ENCODE measurements at regions of chr17 and their contacts with region 1.

Region 1: DNA sequence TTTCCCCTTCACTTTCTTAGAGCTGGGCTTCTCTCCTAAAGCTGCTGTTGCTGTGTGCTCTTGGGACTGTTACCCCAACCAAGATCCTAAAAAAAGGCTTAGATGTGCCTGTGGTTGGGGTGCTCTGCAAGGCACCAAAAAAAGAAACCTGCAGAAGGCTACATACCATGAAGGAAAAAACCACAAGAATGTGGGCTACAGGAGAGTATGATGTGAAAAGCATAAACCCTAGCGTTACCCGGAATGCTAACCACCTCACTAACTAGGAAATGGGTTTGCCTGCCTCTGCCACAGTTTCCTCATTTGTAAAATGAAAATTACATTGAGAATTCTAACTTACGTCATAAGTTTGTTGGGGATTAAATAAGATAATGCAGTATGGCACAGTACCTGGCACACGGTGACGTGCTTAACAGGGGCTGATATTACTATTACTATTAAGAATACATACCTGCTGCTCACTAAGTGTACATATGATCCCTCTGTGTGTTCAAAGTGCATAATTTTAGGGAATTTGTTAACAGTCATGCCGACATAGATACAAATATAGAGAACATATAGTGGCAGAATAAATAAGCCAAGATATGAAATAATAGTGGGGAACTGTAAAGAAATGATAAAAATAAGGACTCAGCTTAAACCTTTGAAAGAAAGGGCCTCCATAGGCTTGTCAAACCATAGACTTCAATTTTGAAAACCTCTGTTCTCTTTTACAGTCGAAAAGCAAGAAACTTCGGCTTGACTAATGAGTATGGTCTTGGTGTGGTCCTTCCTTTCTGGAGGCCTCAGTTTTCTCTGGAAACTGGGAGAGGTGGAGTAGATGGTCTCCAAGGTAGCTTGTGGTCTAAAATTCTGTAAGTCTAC is 177.8 kb upstream of the TBX2 start:
- DNase-seq: peak; percentile 36
- H3K4me3 Mint-ChIP-seq: peak overlapping the region; percentile 67
- H3K27ac Mint-ChIP-seq: peak overlapping the region; percentile 92
- H3K4me1 Mint-ChIP-seq: peaks cover 61% of the 10 kb centered on the region
- H3K27me3 Mint-ChIP-seq: no peaks in the 10 kb centered on the region

Region 2: DNA sequence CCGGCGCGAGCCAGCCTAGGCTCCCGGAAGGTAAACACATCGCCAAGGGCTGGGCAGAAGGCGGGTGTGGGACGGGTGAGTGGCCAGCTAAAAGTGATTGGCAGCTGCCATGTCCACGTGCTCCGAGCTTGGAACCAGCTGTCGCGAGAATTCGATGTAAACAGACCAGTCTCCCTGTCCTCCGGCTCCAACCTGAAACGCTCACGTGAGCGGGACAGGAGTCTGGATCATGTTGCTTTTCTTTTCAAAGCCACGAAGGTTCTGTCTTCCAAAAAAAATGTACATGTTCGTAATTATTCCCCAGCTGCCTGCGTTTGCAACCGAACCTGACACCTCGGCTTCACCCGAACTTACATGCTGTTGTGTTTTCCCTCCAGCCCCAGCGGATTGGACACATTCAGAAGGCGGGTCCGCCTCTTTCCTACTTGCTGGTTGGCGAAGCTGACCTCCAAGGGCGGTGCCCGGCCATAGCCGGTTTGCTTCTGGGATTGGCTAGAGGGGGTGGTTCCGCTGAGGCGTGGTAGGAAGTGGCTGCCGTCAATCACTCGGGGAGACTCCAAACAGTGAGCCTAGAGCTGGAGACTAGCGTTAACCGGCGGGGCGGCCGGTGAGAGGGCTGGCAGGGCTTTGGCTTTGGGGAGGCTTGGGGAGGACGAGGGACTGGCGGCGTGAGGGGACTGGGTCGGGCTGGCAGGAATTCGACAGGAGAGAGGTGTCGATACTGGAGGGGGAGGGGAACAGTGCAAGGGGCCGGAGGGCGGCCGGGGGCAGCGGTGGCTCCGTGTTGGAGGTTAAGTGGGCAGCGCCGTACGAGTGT is 544.3 kb before region 1 on chr17 and contains the start of gene BCAS3:
- intact Hi-C with region 1: loop called (anchors 5 kb)
- DNase-seq: peak; percentile 97
- H3K4me3 Mint-ChIP-seq: peak within 1 kb of the TSS; percentile 89
- H3K27ac Mint-ChIP-seq: peak within 1 kb of the TSS; percentile 62
- H3K4me1 Mint-ChIP-seq: peaks cover 19% of the 10 kb centered on the region
- H3K27me3 Mint-ChIP-seq: no peaks in the 10 kb centered on the region
- total RNA-seq, gene BCAS3: 8.3 and 8.5 TPM in 2 replicates

Region 3: DNA sequence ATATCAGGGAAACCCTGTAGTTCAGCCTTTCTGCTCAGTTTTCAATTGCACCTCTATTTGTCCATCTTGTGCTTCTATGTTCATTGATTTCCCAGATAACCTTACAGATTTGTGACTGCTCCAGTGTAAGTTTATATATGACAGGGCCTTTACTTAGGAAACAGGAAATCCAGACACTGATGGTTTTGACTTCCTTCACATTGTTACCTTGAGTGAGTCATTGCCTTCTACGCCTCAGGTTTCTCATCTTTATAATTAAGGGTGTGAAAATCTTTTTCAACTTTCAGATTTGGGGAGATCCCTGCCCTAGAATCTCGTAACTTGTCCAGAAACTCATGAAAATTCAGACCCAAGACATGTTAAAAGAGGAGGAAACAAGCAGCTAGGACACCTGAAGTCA is 164.6 kb before region 1 on chr17:
- intact Hi-C with region 1: loop called (anchors 10 kb)
- DNase-seq: no peak
- H3K4me3 Mint-ChIP-seq: no peak overlapping the region
- H3K27ac Mint-ChIP-seq: no peak overlapping the region
- H3K4me1 Mint-ChIP-seq: peaks cover 24% of the 10 kb centered on the region
- H3K27me3 Mint-ChIP-seq: no peaks in the 10 kb centered on the region

Region 4: GRCh38 chr17:61128661-61129115 is 93.1 kb before region 1 on chr17:
- intact Hi-C with region 1: no loop called
- DNase-seq: no peak
- H3K4me3 Mint-ChIP-seq: no peak overlapping the region
- H3K27ac Mint-ChIP-seq: no peak overlapping the region
- H3K4me1 Mint-ChIP-seq: peaks cover 11% of the 10 kb centered on the region
- H3K27me3 Mint-ChIP-seq: peaks cover 12% of the 10 kb centered on the region

Region 5: DNA sequence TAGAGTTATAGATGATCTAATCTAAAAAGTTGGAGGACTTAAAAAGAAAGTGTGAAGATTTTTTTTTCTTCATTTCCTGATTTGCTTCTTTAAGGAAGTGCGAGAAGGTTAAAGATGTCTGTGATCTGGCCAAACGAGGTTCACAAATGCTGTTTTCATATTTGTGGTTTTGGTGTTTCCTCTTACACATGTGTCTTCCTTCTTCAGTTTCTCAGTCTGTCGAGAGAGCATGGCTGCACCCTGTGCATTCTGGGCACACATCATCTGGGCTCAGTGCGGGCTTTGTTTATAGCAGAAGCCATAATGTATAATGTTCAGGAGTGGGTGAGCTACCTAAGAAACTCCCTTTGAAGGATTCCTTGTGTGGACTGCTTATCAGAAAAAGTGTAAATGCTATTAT is 82.6 kb before region 1 on chr17:
- intact Hi-C with region 1: loop called (anchors 1 kb)
- DNase-seq: peak; percentile 52
- H3K4me3 Mint-ChIP-seq: peak overlapping the region; percentile 21
- H3K27ac Mint-ChIP-seq: peak overlapping the region; percentile 20
- H3K4me1 Mint-ChIP-seq: peaks cover 15% of the 10 kb centered on the region
- H3K27me3 Mint-ChIP-seq: no peaks in the 10 kb centered on the region

Region 6: GRCh38 chr17:61238455-61238933 is 16.7 kb after region 1 on chr17:
- intact Hi-C with region 1: loop called (anchors 1 kb)
- DNase-seq: no peak
- H3K4me3 Mint-ChIP-seq: no peak overlapping the region
- H3K27ac Mint-ChIP-seq: peak overlapping the region; percentile 1
- H3K4me1 Mint-ChIP-seq: peaks cover 34% of the 10 kb centered on the region
- H3K27me3 Mint-ChIP-seq: no peaks in the 10 kb centered on the region

Region 7: DNA sequence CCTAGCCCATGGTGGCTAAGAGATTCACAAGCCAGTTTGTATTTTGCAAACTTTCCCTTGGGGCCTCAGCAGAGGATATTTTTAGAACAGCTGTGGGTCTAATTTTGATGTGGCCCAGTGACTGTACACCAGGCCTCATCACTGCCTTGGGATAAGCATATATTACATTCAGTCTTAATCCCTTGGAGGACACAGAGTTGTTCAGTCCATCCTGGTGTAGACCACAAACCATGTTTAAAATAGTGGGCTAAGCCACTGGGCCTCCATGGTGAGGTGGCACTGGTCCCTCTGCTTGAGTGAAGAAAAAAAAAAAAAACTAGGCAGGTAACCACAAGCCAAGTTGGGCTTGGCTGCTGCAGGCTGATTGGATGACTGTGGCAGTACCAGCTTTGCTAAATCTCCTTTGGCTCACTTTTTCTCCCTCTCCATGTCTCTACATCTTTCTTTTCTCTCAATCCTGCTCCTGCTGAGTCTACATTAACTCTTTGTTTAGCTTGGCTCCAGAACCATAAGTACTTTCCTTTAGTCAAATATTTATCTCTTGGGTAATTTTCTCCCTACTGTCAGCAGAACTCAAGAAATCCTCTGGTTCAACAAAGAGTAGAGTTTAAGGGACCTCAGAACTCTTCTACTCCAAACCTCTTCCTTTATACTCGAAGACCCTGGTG is 57.8 kb after region 1 on chr17:
- intact Hi-C with region 1: loop called (anchors 1 kb)
- DNase-seq: no peak
- H3K4me3 Mint-ChIP-seq: no peak overlapping the region
- H3K27ac Mint-ChIP-seq: no peak overlapping the region
- H3K4me1 Mint-ChIP-seq: peaks cover 28% of the 10 kb centered on the region
- H3K27me3 Mint-ChIP-seq: no peaks in the 10 kb centered on the region

Region 8: GRCh38 chr17:61302953-61303816 is 81.4 kb after region 1 on chr17:
- intact Hi-C with region 1: no loop called
- DNase-seq: no peak
- H3K4me3 Mint-ChIP-seq: no peak overlapping the region
- H3K27ac Mint-ChIP-seq: no peak overlapping the region
- H3K4me1 Mint-ChIP-seq: no peaks in the 10 kb centered on the region
- H3K27me3 Mint-ChIP-seq: peaks cover 2% of the 10 kb centered on the region

Measured in activated T-helper 1 cell treated with anti-CD3 and anti-CD28 coated beads, Interleukin-12 subunit alpha, Interleukin-12 subunit beta, Interleukin-2, Interleukin-4 antibody, amounts not matched to agents 30 ng/mL and 10 ng/mL and 1 ng/mL, durations not matched to agents 14 hours and 24 hours and 36 hours (primary cell).